Activated CD4-positive, alpha-beta memory T cell treated with anti-CD3 and anti-CD28 coated beads for 36 hours (primary cell): ENCODE measurements at regions of chr19 and their contacts with region 1.

Region 1: DNA sequence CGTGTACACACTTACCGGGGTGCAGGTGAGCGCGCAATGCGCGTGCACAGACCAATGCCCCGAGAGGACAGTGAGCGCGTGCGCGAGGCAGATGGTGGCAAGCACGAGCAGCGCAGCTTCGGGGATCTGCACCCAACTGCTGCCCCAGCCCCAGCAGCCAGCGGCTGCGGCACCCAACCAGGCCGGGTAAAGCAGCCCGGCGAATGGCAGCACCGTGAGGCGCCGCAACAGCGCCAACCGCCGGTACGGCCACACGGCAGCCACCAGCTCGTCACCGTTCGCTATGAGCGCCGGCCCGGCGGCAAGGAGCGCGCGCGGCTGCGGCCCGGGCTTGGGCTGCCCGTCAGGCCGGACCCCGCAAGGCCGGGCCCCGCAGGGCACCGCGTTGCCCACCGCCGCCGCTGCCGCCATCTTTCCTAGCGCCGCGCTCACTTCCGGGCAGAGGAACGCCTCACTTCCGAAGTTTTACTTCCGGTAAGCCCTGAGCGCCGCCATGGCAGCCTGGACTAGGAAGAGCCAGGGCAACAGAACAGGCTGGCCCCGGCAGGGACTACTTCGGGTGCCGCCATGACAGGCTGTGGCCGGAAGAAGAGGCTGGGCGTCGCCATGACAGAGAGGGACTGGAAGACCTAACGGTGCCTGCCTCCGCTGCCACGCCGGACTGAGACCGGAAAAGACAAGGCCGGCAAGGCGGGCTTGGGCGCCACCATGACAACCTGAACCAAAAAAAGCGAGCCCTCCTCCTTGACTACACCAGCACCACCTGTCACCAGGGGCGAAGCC is at the start of gene ATP13A1:
- DNase-seq: peak; percentile 95
- H3K4me3 Mint-ChIP-seq: peak within 1 kb of the TSS; percentile 96
- H3K27ac Mint-ChIP-seq: peak within 1 kb of the TSS; percentile 98
- H3K4me1 Mint-ChIP-seq: peaks cover 39% of the 10 kb centered on the region
- H3K27me3 Mint-ChIP-seq: no peaks in the 10 kb centered on the region
- total RNA-seq, gene ATP13A1: 66.6 to 69.2 TPM

Region 2: DNA sequence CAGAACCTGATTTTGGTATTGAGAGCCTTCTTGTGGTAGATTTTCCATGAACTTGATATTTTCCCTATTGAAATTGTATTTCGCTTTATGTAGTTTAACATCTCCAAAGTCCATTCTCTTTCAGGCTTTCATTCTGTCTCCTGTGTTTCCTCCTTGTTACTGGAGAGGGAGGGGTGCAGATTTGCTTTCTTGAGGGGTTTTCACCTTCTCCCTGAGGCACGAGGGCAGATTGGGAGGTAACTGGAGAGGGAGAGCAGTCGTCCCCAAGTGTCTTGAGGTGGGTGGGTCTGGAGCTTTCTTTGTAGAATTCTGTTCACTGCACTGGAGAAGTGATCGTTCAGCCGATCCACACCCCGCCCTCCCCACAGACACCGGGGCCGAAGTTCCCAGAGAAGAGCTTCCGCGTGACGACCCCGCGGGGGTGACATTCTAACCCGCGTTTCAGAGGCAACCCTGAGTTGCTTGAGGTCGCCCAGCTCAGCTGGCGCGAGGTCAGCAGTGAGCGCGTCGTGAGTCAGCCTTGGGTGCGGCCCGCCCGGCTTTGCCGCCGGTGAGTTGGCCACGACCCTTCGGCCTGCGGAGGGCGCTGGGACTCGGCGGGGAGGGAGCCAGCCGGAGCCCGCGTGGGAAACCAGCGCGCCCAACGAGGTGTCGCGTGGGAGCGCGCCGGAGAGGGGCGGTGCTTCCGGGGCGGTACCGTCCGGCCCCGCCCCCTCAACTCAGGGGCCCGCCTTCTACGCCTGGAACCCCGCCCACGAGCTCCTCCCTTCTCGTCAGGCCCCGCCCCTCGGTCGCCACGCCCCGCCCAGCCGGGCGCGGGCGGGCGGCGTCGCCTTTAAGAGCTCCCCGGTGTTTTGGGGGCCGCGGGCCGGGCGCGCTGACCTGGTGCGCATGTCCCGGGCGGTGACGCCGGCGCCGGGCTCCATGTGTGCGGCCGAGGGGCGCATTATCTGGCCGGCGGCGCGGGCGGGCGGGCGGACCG is 258.3 kb before region 1 on chr19 and contains the start of gene GATAD2A:
- CTCF ChIA-PET with region 1: no interaction called
- POLR2A ChIA-PET with region 1: no interaction called
- intact Hi-C with region 1: loop called (anchors 10 kb)
- DNase-seq: peak; percentile 94
- H3K4me3 Mint-ChIP-seq: peak within 1 kb of the TSS; percentile 95
- H3K27ac Mint-ChIP-seq: peak within 1 kb of the TSS; percentile 93
- H3K4me1 Mint-ChIP-seq: peaks cover 62% of the 10 kb centered on the region
- H3K27me3 Mint-ChIP-seq: no peaks in the 10 kb centered on the region
- total RNA-seq, gene GATAD2A: 114 TPM

Region 3: DNA sequence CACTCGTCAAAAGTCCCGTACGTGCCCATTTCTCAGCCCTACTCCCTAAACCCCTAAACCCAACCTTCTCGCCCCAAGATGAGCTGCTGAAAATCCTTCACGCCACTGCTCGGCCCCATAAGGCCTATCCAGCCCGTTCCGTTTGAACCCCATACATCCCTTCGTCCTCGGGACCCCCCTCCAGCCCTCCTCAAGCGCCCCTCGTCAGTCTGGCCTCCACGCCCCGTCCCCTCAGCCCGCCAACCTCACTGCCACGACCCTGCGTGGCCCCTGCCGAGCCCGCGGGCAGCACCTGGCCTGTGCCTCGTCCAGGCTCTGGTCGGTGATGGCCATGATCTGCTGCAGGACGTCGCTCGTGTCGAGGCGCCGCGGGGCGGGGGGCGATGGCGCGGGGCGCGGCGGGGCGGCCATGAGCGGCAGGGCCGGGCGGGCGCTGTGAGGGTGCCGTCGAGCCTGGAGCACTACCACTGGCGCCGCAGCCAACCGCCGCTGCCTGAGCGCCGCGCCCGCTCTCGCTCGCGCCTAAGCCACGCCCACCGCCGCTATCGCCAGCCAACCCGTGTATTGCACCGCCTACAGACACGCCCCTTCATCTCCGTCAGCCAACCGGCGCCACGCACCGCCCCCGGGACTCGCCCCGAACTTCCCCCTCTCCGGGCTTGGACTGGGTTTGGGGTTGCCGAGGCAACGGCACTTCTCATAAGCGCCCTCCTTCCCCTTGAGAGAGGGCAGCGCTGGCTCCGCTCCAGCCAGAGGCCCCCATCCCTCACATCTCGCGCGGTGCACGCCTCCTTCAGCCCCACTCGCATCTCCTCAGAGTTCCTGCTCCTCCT is 45.0 kb before region 1 on chr19 and contains the start of gene PBX4:
- CTCF ChIA-PET with region 1: no interaction called
- POLR2A ChIA-PET with region 1: no interaction called
- intact Hi-C with region 1: loop called (anchors 2 kb)
- DNase-seq: peak; percentile 99
- H3K4me3 Mint-ChIP-seq: peak within 1 kb of the TSS; percentile 94
- H3K27ac Mint-ChIP-seq: peak within 1 kb of the TSS; percentile 81
- H3K4me1 Mint-ChIP-seq: peaks cover 43% of the 10 kb centered on the region
- H3K27me3 Mint-ChIP-seq: no peaks in the 10 kb centered on the region
- total RNA-seq, gene PBX4: 44.9 to 45.7 TPM

Region 4: GRCh38 chr19:19744641-19745040 is 81.2 kb after region 1 on chr19:
- CTCF ChIA-PET with region 1: no interaction called
- POLR2A ChIA-PET with region 1: no interaction called
- intact Hi-C with region 1: no loop called
- DNase-seq: no peak
- H3K4me3 Mint-ChIP-seq: no peak overlapping the region
- H3K27ac Mint-ChIP-seq: no peak overlapping the region
- H3K4me1 Mint-ChIP-seq: no peaks in the 10 kb centered on the region
- H3K27me3 Mint-ChIP-seq: no peaks in the 10 kb centered on the region

Region 5: GRCh38 chr19:19776041-19777008 is 112.9 kb after region 1 on chr19:
- CTCF ChIA-PET with region 1: no interaction called
- POLR2A ChIA-PET with region 1: interaction called, 5 read pairs
- intact Hi-C with region 1: loop called (anchors 1 kb)
- DNase-seq: peak; percentile 96
- H3K4me3 Mint-ChIP-seq: peak overlapping the region; percentile 97
- H3K27ac Mint-ChIP-seq: peak overlapping the region; percentile 93
- H3K4me1 Mint-ChIP-seq: peaks cover 44% of the 10 kb centered on the region
- H3K27me3 Mint-ChIP-seq: no peaks in the 10 kb centered on the region

Region 6: GRCh38 chr19:19873381-19873780 is 209.9 kb after region 1 on chr19:
- CTCF ChIA-PET with region 1: no interaction called
- POLR2A ChIA-PET with region 1: interaction called, 10 read pairs
- intact Hi-C with region 1: no loop called
- DNase-seq: no peak
- H3K4me3 Mint-ChIP-seq: no peak overlapping the region
- H3K27ac Mint-ChIP-seq: no peak overlapping the region
- H3K4me1 Mint-ChIP-seq: peaks cover 37% of the 10 kb centered on the region
- H3K27me3 Mint-ChIP-seq: no peaks in the 10 kb centered on the region